Activated CD4-positive, alpha-beta memory T cell treated with anti-CD3 and anti-CD28 coated beads, Interleukin-2, amount 10 ng/mL, durations not matched to agents 7 days and 5 days (primary cell): ENCODE measurements at regions of chr12 and their contacts with region 1.

Region 1: GRCh38 chr12:47361389-47362021 is 281.7 kb upstream of the AMIGO2 start:
- DNase-seq: peak; percentile 68
- H3K4me3 Mint-ChIP-seq: peak overlapping the region; percentile 76
- H3K27ac Mint-ChIP-seq: peak overlapping the region; percentile 100
- H3K4me1 Mint-ChIP-seq: peaks cover 60% of the 10 kb centered on the region
- H3K27me3 Mint-ChIP-seq: no peaks in the 10 kb centered on the region

Region 2: DNA sequence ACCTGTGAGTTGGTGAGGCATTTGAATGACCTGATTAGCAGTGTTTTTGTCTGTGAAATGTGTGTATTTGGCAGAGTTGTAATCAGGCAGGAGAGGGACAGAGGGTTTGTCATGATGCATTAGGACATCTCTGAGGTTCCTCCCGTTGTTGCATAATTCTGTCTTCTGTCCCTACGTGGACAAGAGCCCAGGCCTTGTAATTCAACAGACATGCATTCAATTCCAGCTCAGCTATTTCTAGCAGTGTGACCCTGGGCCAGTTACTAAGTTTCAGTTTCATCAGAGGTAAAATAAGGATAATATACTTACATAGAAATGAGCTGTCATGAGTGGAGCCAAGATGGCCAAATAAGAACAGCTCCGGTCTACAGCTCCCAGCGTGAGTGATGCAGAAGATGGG is 744.3 kb before region 1 on chr12:
- CTCF ChIA-PET with region 1: no interaction called
- POLR2A ChIA-PET with region 1: no interaction called
- DNase-seq: no peak
- H3K4me3 Mint-ChIP-seq: no peak overlapping the region
- H3K27ac Mint-ChIP-seq: no peak overlapping the region
- H3K4me1 Mint-ChIP-seq: peaks cover 2% of the 10 kb centered on the region
- H3K27me3 Mint-ChIP-seq: no peaks in the 10 kb centered on the region

Region 3: GRCh38 chr12:47194501-47194900 is 167.0 kb before region 1 on chr12:
- CTCF ChIA-PET with region 1: interaction called, 3 read pairs
- POLR2A ChIA-PET with region 1: interaction called, 12 read pairs
- DNase-seq: no peak
- H3K4me3 Mint-ChIP-seq: no peak overlapping the region
- H3K27ac Mint-ChIP-seq: peak overlapping the region; percentile 84
- H3K4me1 Mint-ChIP-seq: peaks cover 56% of the 10 kb centered on the region
- H3K27me3 Mint-ChIP-seq: no peaks in the 10 kb centered on the region

Region 4: DNA sequence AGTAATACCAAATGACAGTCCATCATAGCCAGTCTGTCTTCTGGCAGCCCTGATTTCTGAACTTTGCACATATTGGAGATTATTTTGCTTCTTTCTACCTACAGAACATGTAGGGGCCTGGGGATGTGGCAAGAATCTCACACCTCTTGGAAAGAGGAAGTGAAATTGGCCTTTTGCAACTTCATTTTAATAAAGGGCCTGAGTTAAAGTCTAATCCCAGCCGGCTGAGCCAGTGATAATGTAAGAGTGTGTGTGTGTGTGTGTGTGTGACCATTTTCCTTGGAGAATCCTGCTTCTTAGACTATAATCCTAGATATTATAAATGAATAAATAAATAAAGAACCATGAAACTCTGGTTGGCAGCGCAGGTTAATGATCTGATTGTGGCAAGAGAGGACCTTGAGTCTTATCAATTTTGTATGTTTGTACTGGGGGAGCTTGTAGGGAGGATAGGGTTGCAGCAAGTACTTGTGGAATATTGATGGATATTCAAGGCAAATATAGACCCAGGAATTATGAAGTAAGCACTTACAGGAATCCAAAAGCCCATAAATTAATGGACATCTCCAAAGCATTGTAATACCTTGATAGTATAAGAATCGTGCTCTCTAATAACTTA is 48.6 kb before region 1 on chr12:
- CTCF ChIA-PET with region 1: no interaction called
- POLR2A ChIA-PET with region 1: no interaction called
- DNase-seq: no peak
- H3K4me3 Mint-ChIP-seq: no peak overlapping the region
- H3K27ac Mint-ChIP-seq: no peak overlapping the region
- H3K4me1 Mint-ChIP-seq: peaks cover 31% of the 10 kb centered on the region
- H3K27me3 Mint-ChIP-seq: no peaks in the 10 kb centered on the region

Region 5: GRCh38 chr12:47391566-47391965 is 30.1 kb after region 1 on chr12:
- CTCF ChIA-PET with region 1: interaction called, 6 read pairs
- POLR2A ChIA-PET with region 1: interaction called, 27 read pairs
- DNase-seq: peak; percentile 78
- H3K4me3 Mint-ChIP-seq: peak overlapping the region; percentile 12
- H3K27ac Mint-ChIP-seq: peak overlapping the region; percentile 95
- H3K4me1 Mint-ChIP-seq: peaks cover 79% of the 10 kb centered on the region
- H3K27me3 Mint-ChIP-seq: no peaks in the 10 kb centered on the region

Region 6: DNA sequence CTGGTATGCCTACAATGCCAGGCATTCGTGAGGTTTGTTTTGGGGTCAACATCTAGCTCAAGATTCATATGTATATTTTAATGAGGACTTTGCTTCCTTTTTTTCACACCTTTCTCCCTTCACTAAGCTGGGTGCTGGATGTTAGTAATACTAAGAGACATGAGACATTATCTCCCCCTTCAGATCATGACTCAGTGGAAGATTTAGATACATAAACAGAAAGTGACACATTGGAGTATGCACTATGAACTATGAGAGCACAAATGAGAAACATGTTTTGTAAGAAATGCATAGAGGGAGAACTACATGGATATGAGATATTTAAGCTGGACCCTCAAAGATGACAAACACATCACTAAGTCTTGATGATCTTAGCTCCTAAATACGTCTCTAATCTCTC is 58.0 kb after region 1 on chr12:
- CTCF ChIA-PET with region 1: no interaction called
- POLR2A ChIA-PET with region 1: no interaction called
- DNase-seq: no peak
- H3K4me3 Mint-ChIP-seq: no peak overlapping the region
- H3K27ac Mint-ChIP-seq: no peak overlapping the region
- H3K4me1 Mint-ChIP-seq: peaks cover 5% of the 10 kb centered on the region
- H3K27me3 Mint-ChIP-seq: no peaks in the 10 kb centered on the region